Thyroid gland (tissue), 4 donors: ENCODE measurements at regions of chr12 and their contacts with region 1.

Region 1: DNA sequence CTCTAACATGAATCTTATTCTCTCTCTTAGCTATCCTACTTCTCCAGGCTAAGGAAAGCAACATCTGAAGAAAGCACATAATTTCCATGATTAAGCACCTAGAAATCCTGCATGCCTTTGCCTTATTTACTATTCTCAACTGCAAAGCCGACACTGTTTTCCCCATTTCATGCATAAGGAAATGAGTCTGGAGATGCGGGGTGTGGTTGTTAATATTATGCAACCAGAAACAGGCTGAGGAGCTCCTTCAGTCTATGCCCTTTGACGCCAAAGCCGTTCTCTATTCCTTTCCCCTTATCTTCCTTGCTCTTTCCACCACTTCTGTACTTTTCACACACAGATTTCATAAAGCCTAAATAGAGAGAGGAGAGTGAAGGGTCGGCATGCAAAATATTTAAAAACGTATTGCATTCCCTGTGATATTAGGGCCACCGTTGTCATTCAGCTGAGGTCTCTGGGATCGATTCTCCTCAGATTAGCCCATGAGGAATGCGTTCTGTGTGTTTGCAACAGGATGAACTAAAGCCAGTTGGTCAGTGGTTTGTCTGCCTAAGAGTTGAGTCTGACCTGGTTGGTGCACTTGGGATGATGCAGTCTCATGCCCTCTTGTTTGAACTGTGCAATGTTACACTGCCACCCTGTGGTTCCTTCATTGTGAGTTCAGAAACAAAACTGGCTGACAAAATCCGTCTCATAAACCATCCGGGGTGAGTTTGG is 53.1 kb upstream of the PLEKHG7 start:
- DNase-seq: peak; percentile 58 to 68
- H3K4me3 ChIP-seq: no peak overlapping the region
- H3K27ac ChIP-seq: no peak overlapping the region
- H3K4me1 ChIP-seq: peaks cover 9 to 10% of the 10 kb centered on the region in 2 donors
- H3K27me3 ChIP-seq: no peaks in the 10 kb centered on the region
- CTCF ChIP-seq: peak; percentile 27 to 88 (median 70)
- POLR2A ChIP-seq: no peak

Region 2: DNA sequence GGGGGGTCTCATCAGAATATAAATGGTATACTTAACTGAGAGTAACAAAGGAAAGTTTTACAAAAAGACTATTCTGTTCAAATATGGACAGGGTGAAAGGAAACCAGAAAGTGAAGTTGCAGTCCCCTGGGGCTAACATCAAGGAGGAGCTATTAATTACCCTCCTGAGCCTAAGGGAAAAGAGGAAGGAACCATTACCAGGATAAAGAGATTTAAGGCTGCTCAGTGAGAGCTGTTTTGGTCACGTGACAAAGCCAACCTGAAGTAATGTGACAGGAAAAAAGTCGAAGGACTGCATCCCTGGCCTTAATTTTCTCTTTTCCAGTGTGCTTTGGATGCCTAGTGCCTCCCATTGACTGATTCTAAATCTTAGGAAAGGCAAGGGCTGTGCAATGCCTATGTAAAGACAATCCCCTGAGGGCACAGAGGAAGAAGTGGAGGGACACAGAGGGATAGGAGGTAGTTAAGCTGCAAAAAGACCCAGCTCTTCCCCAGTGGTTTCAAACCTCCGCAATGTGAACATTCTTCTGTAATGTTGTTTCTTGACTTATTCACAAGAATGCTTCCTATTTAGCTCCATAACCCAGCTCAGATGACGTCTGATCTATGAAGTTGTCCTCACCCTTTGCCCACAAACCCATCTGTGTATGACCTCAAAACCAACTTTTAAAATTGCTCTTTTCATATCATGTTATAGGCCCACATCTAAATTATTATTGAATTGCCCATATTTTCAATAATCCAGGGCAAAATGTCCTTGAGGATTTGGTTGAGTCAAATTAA is 1279.4 kb before region 1 on chr12:
- intact Hi-C with region 1: loop called (anchors 10 kb)
- DNase-seq: no peak
- H3K4me3 ChIP-seq: no peak overlapping the region
- H3K27ac ChIP-seq: no peak overlapping the region
- H3K4me1 ChIP-seq: no peaks in the 10 kb centered on the region
- H3K27me3 ChIP-seq: no peaks in the 10 kb centered on the region
- CTCF ChIP-seq: no peak
- POLR2A ChIP-seq: no peak

Region 3: DNA sequence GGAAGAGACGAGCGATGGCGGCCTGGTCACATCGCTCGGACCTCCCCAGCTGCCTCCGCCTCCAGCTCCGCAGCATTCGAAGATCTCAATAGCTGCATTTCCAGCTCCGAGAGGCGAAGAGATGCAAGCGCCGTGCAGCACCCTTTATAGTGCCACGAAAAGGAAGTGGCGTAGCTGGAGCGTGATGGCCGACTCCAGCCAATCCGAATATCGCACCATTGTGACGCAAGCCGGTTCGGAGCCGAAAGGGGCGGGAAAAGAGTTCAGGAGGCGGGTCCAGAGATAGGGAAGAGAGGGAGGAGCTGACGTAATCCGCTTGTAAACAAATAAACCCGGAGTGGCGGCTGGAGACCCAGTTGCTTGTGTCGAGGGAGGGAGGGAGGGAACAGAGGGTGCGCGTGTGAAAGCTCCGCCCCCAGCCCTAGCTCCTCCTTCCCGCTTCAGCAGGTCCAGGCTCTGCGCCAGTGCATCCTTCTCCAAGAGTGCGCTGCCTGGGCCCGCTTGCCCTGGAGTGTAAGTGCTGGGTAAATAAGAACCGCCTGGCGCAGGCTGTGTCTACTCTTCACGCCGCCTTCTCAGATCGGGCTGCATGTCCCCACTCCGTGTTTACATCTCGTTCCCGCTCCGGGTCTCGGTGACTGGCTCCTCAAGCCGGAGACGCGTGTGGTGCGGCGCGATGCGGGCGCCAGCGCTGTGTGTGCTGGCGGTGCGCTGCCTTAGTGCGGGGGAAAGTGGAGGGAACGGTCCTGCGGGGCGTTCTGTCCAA is 503.8 kb before region 1 on chr12 and contains the start of gene BTG1:
- intact Hi-C with region 1: loop called (anchors 10 kb)
- DNase-seq: peak; percentile 98 to 99
- H3K4me3 ChIP-seq: peak within 1 kb of the TSS; percentile 68 to 91 (median 83)
- H3K27ac ChIP-seq: peak within 1 kb of the TSS; percentile 97 to 100 (median 98)
- H3K4me1 ChIP-seq: peaks cover 13 to 16% of the 10 kb centered on the region in 2 donors
- H3K27me3 ChIP-seq: no peaks in the 10 kb centered on the region
- CTCF ChIP-seq: no peak
- POLR2A ChIP-seq: peak; percentile 96 to 100
- total RNA-seq, gene BTG1: 21.9 to 28.1 (median 24.3) TPM

Region 4: DNA sequence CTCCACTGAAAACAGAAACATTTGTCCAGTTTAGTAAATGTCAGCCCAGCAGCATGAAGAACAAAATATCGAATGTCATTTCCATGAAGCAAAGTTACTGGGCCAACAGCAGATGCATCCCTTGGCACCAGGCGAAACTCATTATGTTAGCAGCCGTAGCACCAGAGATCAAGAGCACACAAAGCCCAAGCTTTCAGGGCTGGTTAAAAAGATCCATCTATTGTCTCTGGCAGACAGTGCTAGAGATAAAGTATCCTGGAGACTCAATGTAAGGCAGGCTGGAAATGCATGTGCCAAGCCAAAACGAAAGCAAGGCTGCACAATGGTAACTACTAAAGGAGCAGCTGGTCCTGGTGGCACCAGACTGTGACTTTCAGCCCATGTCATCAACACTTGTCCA is 67.2 kb before region 1 on chr12:
- intact Hi-C with region 1: loop called (anchors 10 kb)
- DNase-seq: no peak
- H3K4me3 ChIP-seq: no peak overlapping the region
- H3K27ac ChIP-seq: no peak overlapping the region
- H3K4me1 ChIP-seq: no peaks in the 10 kb centered on the region
- H3K27me3 ChIP-seq: no peaks in the 10 kb centered on the region
- CTCF ChIP-seq: no peak
- POLR2A ChIP-seq: no peak